ENCODE measurements at regions of chr10 and their contacts with region 1.

Region 1: DNA sequence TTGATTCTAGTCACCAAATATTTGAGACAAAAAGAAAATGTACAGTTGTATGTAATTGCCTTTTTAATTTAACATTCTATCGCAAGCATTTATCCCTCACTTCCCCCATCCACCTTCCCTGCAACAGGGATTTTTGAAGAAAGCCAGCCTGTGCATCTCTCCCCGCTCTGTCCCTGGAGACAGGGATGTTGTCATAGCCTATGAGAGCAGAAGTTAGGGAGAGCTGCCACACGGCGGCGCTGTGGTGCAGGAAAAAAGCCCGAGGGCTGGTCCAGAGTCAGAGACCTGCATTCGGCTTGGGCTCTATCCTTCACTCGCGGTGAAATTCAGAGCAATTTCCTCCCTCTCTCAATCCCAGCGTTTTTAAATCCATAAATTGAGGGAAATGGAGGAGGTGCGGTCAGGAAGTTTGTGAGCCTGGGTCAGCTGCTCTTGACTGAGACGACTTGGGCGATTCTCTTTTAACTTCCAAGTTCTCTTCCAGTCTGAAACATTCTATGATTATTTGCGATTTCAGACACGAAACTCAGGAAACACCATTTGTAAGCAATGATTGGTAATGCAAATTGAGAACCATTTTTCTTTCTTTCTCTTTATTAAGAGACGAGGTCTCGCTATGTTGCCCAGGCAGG is 17.5 kb downstream of the HKDC1 start:
- DNase-seq: peak; percentile 92
- H3K4me3 ChIP-seq: peak overlapping the region in 1 of 2 donors; percentile 9
- H3K27ac ChIP-seq: no peak overlapping the region
- H3K4me1 ChIP-seq: peaks cover 8% of the 10 kb centered on the region
- H3K27me3 ChIP-seq: no peaks in the 10 kb centered on the region
- CTCF ChIP-seq: peak; percentile 93 to 97 (median 94)
- POLR2A ChIP-seq: no peak

Region 2: GRCh38 chr10:69392481-69393000 is 154.9 kb after region 1 on chr10:
- intact Hi-C with region 1: loop called (anchors 5 kb)
- DNase-seq: peak; percentile 91
- H3K4me3 ChIP-seq: no peak overlapping the region
- H3K27ac ChIP-seq: no peak overlapping the region
- H3K4me1 ChIP-seq: peaks cover 8% of the 10 kb centered on the region
- H3K27me3 ChIP-seq: no peaks in the 10 kb centered on the region
- CTCF ChIP-seq: peak; percentile 89 to 91 (median 90)
- POLR2A ChIP-seq: no peak

Region 3: DNA sequence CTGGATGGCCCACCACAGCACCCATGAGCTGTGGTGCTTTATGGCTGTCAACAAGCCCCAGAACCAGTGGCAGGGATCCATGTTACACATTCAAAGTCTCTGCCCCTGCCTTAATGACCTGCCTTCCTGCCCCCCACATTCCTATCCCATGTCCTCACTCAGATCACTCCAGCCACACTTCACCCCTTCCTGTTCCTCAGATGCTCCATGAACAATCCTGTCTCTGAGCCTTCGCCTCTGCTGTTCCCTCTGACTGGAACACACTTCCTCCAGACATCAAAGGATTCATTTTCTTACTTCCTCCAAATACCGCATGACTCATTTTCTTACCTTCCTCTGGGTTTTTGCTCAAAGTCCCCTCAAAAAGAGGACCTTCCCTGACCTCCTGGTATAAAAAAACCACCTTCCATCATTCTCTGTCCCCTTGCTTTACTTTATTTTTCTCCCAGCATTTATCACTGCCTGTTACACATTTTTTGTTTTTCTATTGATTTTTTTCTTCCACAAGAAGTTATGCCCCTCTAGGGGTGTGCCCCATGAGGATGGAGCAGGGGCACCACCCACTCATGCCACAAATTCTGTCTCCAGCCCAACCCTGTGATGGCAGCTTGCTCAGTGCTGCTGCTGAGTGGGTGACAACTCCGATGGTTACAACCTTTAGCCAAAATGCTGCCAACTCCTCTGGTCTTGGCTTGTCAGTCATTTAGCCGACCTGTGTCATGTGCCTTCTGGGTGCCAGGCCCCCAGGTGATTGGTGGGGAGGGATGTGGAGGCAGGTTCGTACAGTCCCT is 582.3 kb after region 1 on chr10:
- intact Hi-C with region 1: no loop called
- DNase-seq: no peak
- H3K4me3 ChIP-seq: no peak overlapping the region
- H3K27ac ChIP-seq: no peak overlapping the region
- H3K4me1 ChIP-seq: no peaks in the 10 kb centered on the region
- H3K27me3 ChIP-seq: no peaks in the 10 kb centered on the region
- CTCF ChIP-seq: no peak
- POLR2A ChIP-seq: no peak

Measured in testis (tissue), 5 donors.